Panc1 (cell line): ENCODE measurements at regions of chr12 and their contacts with region 1.

Region 1: DNA sequence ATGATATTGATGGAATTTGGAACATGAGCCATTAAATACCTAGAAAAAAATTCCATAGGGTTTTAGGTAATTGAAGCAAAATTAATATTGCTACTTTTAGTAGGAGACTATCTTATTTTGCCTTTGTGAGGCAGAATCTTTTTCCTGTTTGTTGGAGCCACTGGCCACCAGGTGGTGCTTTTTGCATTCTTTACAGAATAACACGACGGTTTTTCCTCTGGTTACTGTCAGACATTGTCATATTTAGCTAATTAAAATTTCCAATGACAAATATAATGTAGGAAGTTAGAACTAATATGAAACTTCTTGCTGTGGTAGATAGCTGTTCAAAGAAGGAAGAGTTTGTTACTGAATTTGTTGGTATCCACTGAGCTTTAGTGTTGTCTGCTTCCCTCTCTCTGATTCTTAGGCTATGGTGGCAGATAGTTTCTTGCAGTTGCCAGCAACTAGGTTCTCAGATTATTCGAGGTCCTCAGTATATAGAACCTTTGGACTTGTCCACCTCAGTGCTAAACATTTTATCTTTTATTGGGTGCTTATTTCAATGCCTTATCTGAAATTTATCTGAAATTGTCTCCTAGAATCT is 25.7 kb downstream of the RAB21 start:
- DNase-seq: no peak
- ATAC-seq: 0 out of 2 replicates have a peak, but pooled peaks have one; percentile 51
- H3K4me3 ChIP-seq: no peak overlapping the region
- H3K27ac ChIP-seq: no peak overlapping the region
- H3K4me1 ChIP-seq: no peaks in the 10 kb centered on the region
- H3K27me3 ChIP-seq: no peaks in the 10 kb centered on the region
- CTCF ChIP-seq: peak; percentile 75; the same call in 1 of the 2 replicates

Region 2: DNA sequence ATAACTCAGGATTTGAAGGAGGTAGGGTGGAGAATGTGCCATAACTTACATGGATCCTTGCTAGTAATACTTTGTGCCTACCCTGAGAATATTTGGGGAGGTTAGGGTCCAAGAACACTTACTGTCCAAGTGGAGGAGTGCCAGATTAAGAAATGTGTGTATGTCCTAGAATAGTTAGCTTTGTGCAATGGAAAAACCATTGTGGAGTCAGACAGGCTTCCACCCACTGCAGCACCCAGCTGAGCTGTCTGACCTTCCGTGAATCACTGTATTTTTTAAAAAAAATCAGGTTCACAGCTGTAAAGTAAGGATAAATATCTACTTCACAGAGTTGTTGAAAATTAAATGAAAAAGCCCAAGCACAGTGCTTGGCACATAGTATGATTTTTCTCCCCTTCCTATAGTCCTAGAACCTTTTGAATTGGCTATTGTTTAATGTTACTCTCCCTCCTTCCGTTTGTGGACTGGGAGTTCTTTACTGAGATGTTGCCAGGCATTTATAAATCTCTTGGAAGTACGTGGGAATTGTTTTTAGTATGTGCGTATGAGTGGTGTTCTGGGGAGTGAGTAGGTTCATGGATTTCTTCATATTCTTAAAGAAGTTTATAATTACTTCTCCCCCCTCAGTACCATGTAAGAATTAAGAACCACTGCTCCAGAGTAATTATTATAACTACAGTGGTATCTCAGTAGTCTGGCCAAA is 16.5 kb before region 1 on chr12:
- CTCF ChIA-PET with region 1: no interaction called
- POLR2A ChIA-PET with region 1: no interaction called
- in situ Hi-C with region 1: no loop called
- intact Hi-C with region 1: no loop called
- DNase-seq: no peak
- ATAC-seq: no peak
- H3K4me3 ChIP-seq: no peak overlapping the region
- H3K27ac ChIP-seq: no peak overlapping the region
- H3K4me1 ChIP-seq: no peaks in the 10 kb centered on the region
- H3K27me3 ChIP-seq: no peaks in the 10 kb centered on the region
- CTCF ChIP-seq: no peak

Region 3: DNA sequence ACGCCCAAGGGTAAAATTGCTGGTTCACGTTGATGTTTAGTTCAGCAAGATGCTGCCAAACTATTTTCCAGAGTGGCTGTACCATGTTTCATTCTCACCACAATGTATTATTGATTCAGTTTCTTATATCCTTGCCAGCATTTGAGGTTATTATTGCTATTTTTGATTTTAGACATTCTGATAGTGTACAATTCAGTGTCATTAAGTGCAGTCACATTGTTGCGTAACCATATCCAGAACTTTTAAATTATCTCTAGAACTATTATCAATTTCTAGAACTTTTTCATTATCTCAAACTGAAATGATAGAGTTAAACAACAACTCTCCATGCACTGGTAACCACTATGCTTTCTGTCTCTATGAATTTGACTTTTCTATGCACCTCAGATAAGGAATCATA is 48.5 kb after region 1 on chr12:
- CTCF ChIA-PET with region 1: no interaction called
- POLR2A ChIA-PET with region 1: no interaction called
- in situ Hi-C with region 1: no loop called
- intact Hi-C with region 1: no loop called
- DNase-seq: no peak
- ATAC-seq: no peak
- H3K4me3 ChIP-seq: no peak overlapping the region
- H3K27ac ChIP-seq: no peak overlapping the region
- H3K4me1 ChIP-seq: no peaks in the 10 kb centered on the region
- H3K27me3 ChIP-seq: no peaks in the 10 kb centered on the region; the same call in 1 of the 2 replicates
- CTCF ChIP-seq: no peak

Region 4: GRCh38 chr12:71846322-71846940 is 66.1 kb after region 1 on chr12:
- CTCF ChIA-PET with region 1: interaction called, 8 read pairs
- POLR2A ChIA-PET with region 1: interaction called, 5 read pairs
- in situ Hi-C with region 1: no loop called
- intact Hi-C with region 1: loop called (anchors 5 kb)
- DNase-seq: no peak
- ATAC-seq: no peak
- H3K4me3 ChIP-seq: no peak overlapping the region
- H3K27ac ChIP-seq: no peak overlapping the region
- H3K4me1 ChIP-seq: peaks cover 11% of the 10 kb centered on the region; the same call in 1 of the 2 replicates
- H3K27me3 ChIP-seq: no peaks in the 10 kb centered on the region
- CTCF ChIP-seq: peak; percentile 75; the same call in 1 of the 2 replicates

Region 5: GRCh38 chr12:71900091-71900490 is 119.8 kb after region 1 on chr12:
- CTCF ChIA-PET with region 1: no interaction called
- POLR2A ChIA-PET with region 1: no interaction called
- in situ Hi-C with region 1: no loop called
- intact Hi-C with region 1: loop called (anchors 10 kb)
- DNase-seq: no peak
- ATAC-seq: no peak
- H3K4me3 ChIP-seq: no peak overlapping the region
- H3K27ac ChIP-seq: no peak overlapping the region
- H3K4me1 ChIP-seq: no peaks in the 10 kb centered on the region
- H3K27me3 ChIP-seq: no peaks in the 10 kb centered on the region
- CTCF ChIP-seq: peak; percentile 42; the same call in 1 of the 2 replicates